ENCODE measurements at regions of chr19 and their contacts with region 1.

Region 1: DNA sequence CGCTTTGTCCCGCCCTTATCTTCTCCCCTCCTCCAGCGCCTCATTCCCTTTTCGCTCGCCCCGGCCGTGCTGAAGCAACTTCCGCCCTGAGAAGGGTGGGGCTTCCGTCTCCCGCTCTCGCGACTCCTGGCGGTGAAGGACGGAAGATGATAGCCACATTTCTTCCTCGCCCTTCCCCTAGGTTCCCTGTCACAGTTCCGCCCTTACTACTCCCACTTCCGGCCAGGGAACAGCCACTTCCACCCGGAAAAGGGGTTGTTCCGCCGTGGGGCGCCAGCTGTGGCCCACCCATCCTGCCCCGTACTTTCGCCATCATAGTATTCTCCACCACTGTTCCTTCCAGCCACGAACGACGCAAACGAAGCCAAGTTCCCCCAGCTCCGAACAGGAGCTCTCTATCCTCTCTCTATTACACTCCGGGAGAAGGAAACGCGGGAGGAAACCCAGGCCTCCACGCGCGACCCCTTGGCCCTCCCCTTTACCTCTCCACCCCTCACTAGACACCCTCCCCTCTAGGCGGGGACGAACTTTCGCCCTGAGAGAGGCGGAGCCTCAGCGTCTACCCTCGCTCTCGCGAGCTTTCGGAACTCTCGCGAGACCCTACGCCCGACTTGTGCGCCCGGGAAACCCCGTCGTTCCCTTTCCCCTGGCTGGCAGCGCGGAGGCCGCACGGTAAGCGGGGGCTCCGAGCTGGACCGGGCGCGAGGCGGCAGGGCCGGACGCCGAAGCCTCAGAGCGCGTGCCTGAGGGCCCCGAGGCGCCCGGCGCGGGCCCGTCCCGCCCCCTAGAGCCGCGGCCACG is at the start of gene RPS19:
- DNase-seq: peak; percentile 99
- ATAC-seq: peak; percentile 87
- H3K4me3 Mint-ChIP-seq: peak within 1 kb of the TSS; percentile 88
- H3K27ac Mint-ChIP-seq: peak within 1 kb of the TSS; percentile 96
- H3K4me1 Mint-ChIP-seq: peaks cover 44% of the 10 kb centered on the region
- H3K27me3 Mint-ChIP-seq: peaks cover 8% of the 10 kb centered on the region
- total RNA-seq, gene RPS19: 3,024 to 3,056 TPM

Region 2: GRCh38 chr19:41837981-41838708 is 21.7 kb before region 1 on chr19:
- CTCF ChIA-PET with region 1: interaction called, 11 read pairs
- POLR2A ChIA-PET with region 1: no interaction called
- DNase-seq: no peak
- ATAC-seq: no peak
- H3K4me3 Mint-ChIP-seq: no peak overlapping the region
- H3K27ac Mint-ChIP-seq: no peak overlapping the region
- H3K4me1 Mint-ChIP-seq: no peaks in the 10 kb centered on the region
- H3K27me3 Mint-ChIP-seq: peaks cover 29% of the 10 kb centered on the region

Region 3: GRCh38 chr19:41945135-41945766 is 85.4 kb after region 1 on chr19:
- CTCF ChIA-PET with region 1: interaction called, 31 read pairs
- POLR2A ChIA-PET with region 1: interaction called, 12 read pairs
- DNase-seq: peak; percentile 93
- ATAC-seq: peak; percentile 82
- H3K4me3 Mint-ChIP-seq: peak overlapping the region; percentile 34
- H3K27ac Mint-ChIP-seq: peak overlapping the region; percentile 90
- H3K4me1 Mint-ChIP-seq: peaks cover 53% of the 10 kb centered on the region
- H3K27me3 Mint-ChIP-seq: peaks cover 23% of the 10 kb centered on the region

Region 4: GRCh38 chr19:41951686-41952172 is 91.9 kb after region 1 on chr19:
- CTCF ChIA-PET with region 1: interaction called, 31 read pairs
- POLR2A ChIA-PET with region 1: interaction called, 12 read pairs
- DNase-seq: peak; percentile 90
- ATAC-seq: peak; percentile 83
- H3K4me3 Mint-ChIP-seq: no peak overlapping the region
- H3K27ac Mint-ChIP-seq: peak overlapping the region; percentile 49
- H3K4me1 Mint-ChIP-seq: peaks cover 28% of the 10 kb centered on the region
- H3K27me3 Mint-ChIP-seq: peaks cover 3% of the 10 kb centered on the region

Region 5: GRCh38 chr19:41959056-41960053 is 99.5 kb after region 1 on chr19 and contains the start of gene RABAC1:
- CTCF ChIA-PET with region 1: interaction called, 28 read pairs
- POLR2A ChIA-PET with region 1: no interaction called
- DNase-seq: peak; percentile 93
- ATAC-seq: peak; percentile 93
- H3K4me3 Mint-ChIP-seq: peak within 1 kb of the TSS; percentile 89
- H3K27ac Mint-ChIP-seq: peak within 1 kb of the TSS; percentile 78
- H3K4me1 Mint-ChIP-seq: peaks cover 20% of the 10 kb centered on the region
- H3K27me3 Mint-ChIP-seq: no peaks in the 10 kb centered on the region
- total RNA-seq, gene RABAC1: 63.0 to 63.4 TPM